HCT116 (cell line): ENCODE measurements at regions of chr9 and their contacts with region 1.

Region 1: GRCh38 chr9:136283291-136284235 is 20.3 kb downstream of the CCDC187 start:
- DNase-seq: peak; percentile 54
- ATAC-seq: peak; percentile 99
- H3K4me3 ChIP-seq: no peak overlapping the region
- H3K27ac ChIP-seq: no peak overlapping the region
- H3K4me1 ChIP-seq: peaks cover 6 to 9% of the 10 kb centered on the region in 2 experiments; a peak in 3 of 4 replicates
- H3K27me3 ChIP-seq: no peaks in the 10 kb centered on the region
- CTCF ChIP-seq: peak; percentile 78 to 94 (median 86)
- POLR2A ChIP-seq: no peak
- RAD21 ChIP-seq: peak; percentile 94

Region 2: DNA sequence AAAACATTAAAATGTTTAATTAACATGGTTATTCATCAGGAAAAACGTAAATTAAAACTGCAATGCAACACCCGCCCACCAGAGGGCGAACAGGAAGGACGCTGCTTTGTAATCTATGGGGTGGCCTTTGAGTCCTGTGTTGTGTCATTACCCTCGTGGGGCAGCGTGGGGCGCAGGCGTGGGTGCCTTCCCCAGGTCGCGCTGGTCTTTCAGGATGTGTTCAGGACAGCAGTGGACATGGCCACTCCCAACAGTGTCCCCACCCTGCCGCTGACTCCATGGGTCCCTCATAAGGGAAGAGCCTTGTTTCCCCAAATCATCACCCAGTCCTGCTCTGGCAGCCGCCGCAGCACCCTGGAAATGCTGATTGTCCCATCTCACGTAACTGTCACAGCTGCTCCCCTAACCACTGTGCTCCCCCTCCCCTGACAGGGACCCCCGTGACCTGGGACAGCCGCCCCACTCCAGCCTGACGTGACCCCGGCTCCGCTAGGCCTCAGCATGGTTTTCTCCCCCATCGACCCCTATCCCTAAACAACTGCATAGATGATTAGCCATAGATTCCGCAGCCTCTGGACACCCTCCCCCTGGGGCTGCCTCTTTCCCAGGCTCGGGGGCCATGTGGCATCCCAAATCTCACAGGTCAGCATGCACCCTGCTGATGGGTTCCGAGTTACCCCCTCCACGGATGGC is 680.6 kb before region 1 on chr9:
- CTCF ChIA-PET with region 1: no interaction called
- POLR2A ChIA-PET with region 1: no interaction called
- RAD21 ChIA-PET with region 1: no interaction called
- intact Hi-C with region 1: loop called (anchors 5 kb)
- DNase-seq: peak; percentile 29
- ATAC-seq: peak; percentile 66
- H3K4me3 ChIP-seq: no peak overlapping the region
- H3K27ac ChIP-seq: no peak overlapping the region
- H3K4me1 ChIP-seq: peaks cover 0 to 4% of the 10 kb centered on the region in 2 experiments; a peak in 2 of 4 replicates
- H3K27me3 ChIP-seq: no peaks in the 10 kb centered on the region
- CTCF ChIP-seq: peak; percentile 71 to 75 (median 75)
- POLR2A ChIP-seq: no peak
- RAD21 ChIP-seq: peak; percentile 45

Region 3: GRCh38 chr9:135961277-135961705 is 322.3 kb before region 1 on chr9 and contains the start of gene UBAC1:
- CTCF ChIA-PET with region 1: no interaction called
- POLR2A ChIA-PET with region 1: no interaction called
- RAD21 ChIA-PET with region 1: no interaction called
- intact Hi-C with region 1: loop called (anchors 10 kb)
- DNase-seq: peak; percentile 90
- ATAC-seq: peak; percentile 95
- H3K4me3 ChIP-seq: peak within 1 kb of the TSS; percentile 91 to 98
- H3K27ac ChIP-seq: peak within 1 kb of the TSS; percentile 73
- H3K4me1 ChIP-seq: peaks cover 15 to 22% of the 10 kb centered on the region in 2 experiments
- H3K27me3 ChIP-seq: no peaks in the 10 kb centered on the region
- CTCF ChIP-seq: peak in 1 of 3 experiments; percentile 23; a peak in 3 of 6 replicates
- POLR2A ChIP-seq: no peak
- RAD21 ChIP-seq: no peak
- total RNA-seq, gene UBAC1: 54.8 TPM

Region 4: DNA sequence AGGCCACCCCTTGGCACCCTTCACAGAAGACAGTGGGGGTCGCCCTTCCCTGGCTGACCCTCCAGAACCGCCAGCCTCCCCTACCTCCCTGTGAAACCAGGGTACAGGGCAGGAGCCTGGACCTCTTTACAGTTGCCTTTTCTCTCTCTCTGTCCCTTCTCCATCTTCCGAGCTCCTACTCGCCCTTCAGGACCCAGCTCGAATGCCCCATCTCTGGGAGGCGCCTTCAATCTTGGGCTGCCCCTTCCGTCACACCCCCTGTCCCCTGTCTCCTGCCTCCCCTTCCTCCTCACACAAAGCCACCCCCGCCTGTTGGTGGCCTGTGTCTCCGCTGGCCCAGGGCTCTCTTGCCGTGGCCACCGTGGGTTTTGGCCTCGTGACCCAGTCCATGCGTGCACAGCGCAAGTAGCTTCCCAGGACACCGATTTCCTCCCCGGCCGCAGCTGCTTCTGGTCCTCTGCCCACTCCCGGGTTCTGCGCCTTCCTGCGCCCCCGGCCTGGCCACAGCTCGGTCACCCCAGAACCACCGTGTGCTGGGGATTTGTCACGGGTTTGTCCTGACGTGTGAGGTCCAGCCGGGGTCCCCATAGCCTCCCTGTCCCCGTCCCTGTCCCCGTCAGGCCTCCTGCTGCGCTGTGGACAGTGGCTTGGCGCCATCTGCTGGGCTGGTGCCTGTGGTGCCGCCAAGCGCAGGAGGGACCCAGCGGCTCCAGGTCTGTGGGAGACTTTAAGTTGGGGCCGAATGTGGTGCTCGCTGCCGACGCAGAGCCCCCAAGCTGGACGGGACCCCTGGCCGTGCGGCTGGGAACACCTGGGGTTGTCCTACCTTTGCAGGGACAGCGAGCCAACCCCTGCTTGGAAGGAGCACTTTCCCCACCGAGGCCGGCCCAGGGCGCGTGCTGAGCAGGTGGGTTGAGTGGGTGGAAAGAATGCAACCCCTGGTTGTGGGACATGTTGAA is 160.9 kb before region 1 on chr9:
- CTCF ChIA-PET with region 1: no interaction called
- POLR2A ChIA-PET with region 1: no interaction called
- RAD21 ChIA-PET with region 1: no interaction called
- intact Hi-C with region 1: no loop called
- DNase-seq: no peak
- ATAC-seq: peak; percentile 22; the same call in 1 of the 2 replicates
- H3K4me3 ChIP-seq: no peak overlapping the region
- H3K27ac ChIP-seq: no peak overlapping the region
- H3K4me1 ChIP-seq: peaks cover 11 to 24% of the 10 kb centered on the region in 2 experiments
- H3K27me3 ChIP-seq: no peaks in the 10 kb centered on the region
- CTCF ChIP-seq: peak in 2 of 3 experiments; percentile 95; a peak in 4 of 6 replicates
- POLR2A ChIP-seq: no peak
- RAD21 ChIP-seq: no peak

Region 5: DNA sequence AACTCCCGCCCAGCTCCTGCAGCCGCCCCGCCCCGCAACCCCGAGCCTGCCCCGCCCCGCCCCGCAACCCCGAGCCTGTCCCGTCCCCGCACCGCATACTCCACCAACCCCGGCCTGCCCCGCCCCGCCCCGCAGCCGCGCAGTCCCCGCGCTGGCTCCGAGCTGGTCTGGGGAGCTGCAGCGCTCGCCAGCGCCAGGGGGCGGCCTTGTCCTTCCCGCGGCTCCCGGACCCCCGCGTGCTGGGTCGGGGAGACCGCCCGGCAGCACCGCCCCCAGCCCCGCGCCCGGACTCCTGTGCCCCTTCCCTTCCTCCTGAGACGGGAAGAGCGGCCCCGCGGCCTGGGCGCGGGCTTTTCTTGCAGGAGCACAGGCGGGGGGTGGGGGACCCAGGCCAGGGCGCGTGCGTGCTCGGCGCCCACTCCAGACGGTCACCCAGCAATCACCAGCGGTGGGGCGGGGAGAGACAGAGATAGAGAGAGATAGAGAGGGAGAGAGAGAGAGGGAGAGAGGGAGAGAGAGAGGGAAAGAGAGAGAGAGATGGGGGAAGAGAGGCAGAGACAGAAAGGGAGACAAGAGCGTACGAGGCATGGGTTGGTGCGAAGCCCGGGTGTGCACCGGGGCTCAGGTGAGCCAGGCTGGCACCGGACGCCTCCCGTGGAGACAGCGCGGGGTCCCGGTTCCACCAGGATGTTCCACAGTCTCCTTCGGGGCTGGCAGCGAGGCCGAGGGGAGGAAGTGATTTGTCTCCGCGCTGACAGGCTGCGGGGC is 150.2 kb before region 1 on chr9:
- CTCF ChIA-PET with region 1: no interaction called
- POLR2A ChIA-PET with region 1: no interaction called
- RAD21 ChIA-PET with region 1: no interaction called
- intact Hi-C with region 1: loop called (anchors 2 kb)
- DNase-seq: no peak
- ATAC-seq: peak; percentile 88
- H3K4me3 ChIP-seq: peak overlapping the region in 1 of 2 experiments; percentile 38; a peak in 2 of 4 replicates
- H3K27ac ChIP-seq: no peak overlapping the region; the same call in 1 of the 2 replicates
- H3K4me1 ChIP-seq: peaks cover 6 to 30% of the 10 kb centered on the region in 2 experiments; a peak in 3 of 4 replicates
- H3K27me3 ChIP-seq: no peaks in the 10 kb centered on the region
- CTCF ChIP-seq: peak; percentile 23 to 44 (median 42); a peak in 5 of 6 replicates
- POLR2A ChIP-seq: no peak
- RAD21 ChIP-seq: peak; percentile 53

Region 6: DNA sequence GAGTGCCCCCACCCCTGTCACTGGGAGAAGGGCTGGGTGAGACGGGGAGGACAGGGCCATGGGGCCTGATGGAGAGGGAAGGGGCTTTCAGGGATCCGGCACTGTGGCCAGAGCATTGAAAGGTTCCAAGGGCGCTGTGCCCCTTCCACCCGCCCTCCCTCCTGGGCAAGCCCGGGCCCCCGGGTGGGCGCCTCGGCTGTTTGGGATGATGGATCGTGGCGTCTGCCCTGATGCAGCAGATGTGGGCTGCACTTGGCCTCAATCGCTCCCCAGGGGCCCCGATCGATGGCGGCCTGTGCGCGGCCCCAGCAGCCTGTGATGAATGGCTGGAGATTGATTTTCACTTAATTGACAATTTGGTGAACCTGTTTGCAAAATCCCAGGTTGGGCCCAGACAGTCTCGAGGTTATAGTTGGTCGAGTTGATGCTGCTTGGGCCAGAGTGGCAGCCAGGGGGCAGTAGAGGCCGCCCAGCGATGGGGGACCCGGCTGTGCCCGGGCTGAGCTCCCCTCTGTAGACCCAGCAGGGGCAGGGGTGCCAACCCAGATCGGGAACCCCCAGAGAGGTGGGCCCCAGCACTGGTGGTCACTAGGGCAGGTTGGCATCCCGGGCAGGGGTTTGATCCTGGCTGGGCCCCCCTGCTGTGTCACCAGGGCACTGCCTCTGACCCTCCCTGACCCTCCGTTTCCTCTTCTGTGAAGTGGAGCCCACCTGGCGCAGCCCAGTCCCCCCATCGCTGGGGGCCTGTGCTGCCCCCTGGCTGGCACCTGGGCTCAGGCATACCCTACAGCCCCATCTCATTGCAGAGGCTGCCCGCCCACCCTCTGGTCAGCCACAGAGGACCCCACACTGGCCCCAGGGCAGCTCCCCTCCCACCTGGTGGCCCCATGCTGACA is 113.3 kb before region 1 on chr9:
- CTCF ChIA-PET with region 1: interaction called, 4 read pairs
- POLR2A ChIA-PET with region 1: no interaction called
- RAD21 ChIA-PET with region 1: no interaction called
- intact Hi-C with region 1: loop called (anchors 1 kb)
- DNase-seq: no peak
- ATAC-seq: peak; percentile 95
- H3K4me3 ChIP-seq: no peak overlapping the region
- H3K27ac ChIP-seq: no peak overlapping the region
- H3K4me1 ChIP-seq: peaks cover 0 to 8% of the 10 kb centered on the region in 2 experiments; a peak in 1 of 4 replicates
- H3K27me3 ChIP-seq: no peaks in the 10 kb centered on the region
- CTCF ChIP-seq: peak; percentile 78 to 94 (median 94); a peak in 5 of 6 replicates
- POLR2A ChIP-seq: no peak
- RAD21 ChIP-seq: peak; percentile 88